ENCODE measurements at regions of chr12 and their contacts with region 1.

Region 1: DNA sequence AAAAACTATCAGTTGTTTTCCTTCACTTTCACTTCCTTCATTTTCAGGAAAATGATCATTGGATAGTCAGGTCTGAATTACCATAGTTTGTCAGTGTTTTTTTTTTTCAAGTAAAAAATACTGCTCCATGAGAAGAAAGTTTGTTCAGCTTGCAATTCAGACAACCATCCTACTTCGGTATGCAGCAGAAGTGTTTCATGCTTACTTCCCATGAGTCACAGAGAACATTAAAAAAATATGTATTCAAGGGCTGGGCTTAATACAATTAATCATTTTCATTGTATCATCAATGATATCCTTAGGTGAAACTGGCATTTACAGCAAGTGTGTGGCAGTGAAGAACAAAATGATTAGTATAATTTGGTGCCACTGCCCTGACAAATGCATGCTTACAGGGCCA is 21.6 kb downstream of the PYM1 start:
- DNase-seq: peak; percentile 64
- ATAC-seq: peak; percentile 79
- H3K4me3 ChIP-seq: no peak overlapping the region
- H3K27ac ChIP-seq: no peak overlapping the region
- H3K4me1 ChIP-seq: peaks cover 10% of the 10 kb centered on the region; the same call in 1 of the 2 replicates
- H3K27me3 ChIP-seq: no peaks in the 10 kb centered on the region
- CTCF ChIP-seq: no peak

Region 2: GRCh38 chr12:56206457-56207166 is 300.6 kb after region 1 on chr12:
- CTCF ChIA-PET with region 1: no interaction called
- POLR2A ChIA-PET with region 1: interaction called, 13 read pairs
- intact Hi-C with region 1: no loop called
- DNase-seq: peak; percentile 64
- ATAC-seq: peak; percentile 75
- H3K4me3 ChIP-seq: no peak overlapping the region
- H3K27ac ChIP-seq: no peak overlapping the region
- H3K4me1 ChIP-seq: no peaks in the 10 kb centered on the region
- H3K27me3 ChIP-seq: no peaks in the 10 kb centered on the region
- CTCF ChIP-seq: peak; percentile 76

Measured in PC-3 (cell line).